ENCODE measurements at regions of chr2 and their contacts with region 1.

Region 1: GRCh38 chr2:25714740-25715139 is 41.4 kb upstream of the DTNB start:
- DNase-seq: no peak
- ATAC-seq: no peak
- H3K4me3 ChIP-seq: no peak overlapping the region
- H3K4me3 Mint-ChIP-seq: no peak overlapping the region
- H3K27ac ChIP-seq: no peak overlapping the region
- H3K27ac Mint-ChIP-seq: no peak overlapping the region
- H3K4me1 ChIP-seq: peaks cover 3 to 5% of the 10 kb centered on the region in 2 experiments
- H3K4me1 Mint-ChIP-seq: peaks cover 9 to 17% (median 16%) of the 10 kb centered on the region in 3 donors
- H3K27me3 ChIP-seq: peaks cover 0 to 20% of the 10 kb centered on the region in 2 experiments
- H3K27me3 Mint-ChIP-seq: peaks cover 7 to 16% of the 10 kb centered on the region in 2 donors

Region 2: GRCh38 chr2:24754985-24755705 is 959.6 kb before region 1 on chr2:
- CTCF ChIA-PET with region 1: no interaction called
- POLR2A ChIA-PET with region 1: no interaction called
- DNase-seq: no peak
- ATAC-seq: no peak
- H3K4me3 ChIP-seq: no peak overlapping the region
- H3K4me3 Mint-ChIP-seq: no peak overlapping the region
- H3K27ac ChIP-seq: no peak overlapping the region
- H3K27ac Mint-ChIP-seq: no peak overlapping the region
- H3K4me1 ChIP-seq: no peaks in the 10 kb centered on the region
- H3K4me1 Mint-ChIP-seq: no peaks in the 10 kb centered on the region
- H3K27me3 ChIP-seq: no peaks in the 10 kb centered on the region
- H3K27me3 Mint-ChIP-seq: no peaks in the 10 kb centered on the region

Region 3: DNA sequence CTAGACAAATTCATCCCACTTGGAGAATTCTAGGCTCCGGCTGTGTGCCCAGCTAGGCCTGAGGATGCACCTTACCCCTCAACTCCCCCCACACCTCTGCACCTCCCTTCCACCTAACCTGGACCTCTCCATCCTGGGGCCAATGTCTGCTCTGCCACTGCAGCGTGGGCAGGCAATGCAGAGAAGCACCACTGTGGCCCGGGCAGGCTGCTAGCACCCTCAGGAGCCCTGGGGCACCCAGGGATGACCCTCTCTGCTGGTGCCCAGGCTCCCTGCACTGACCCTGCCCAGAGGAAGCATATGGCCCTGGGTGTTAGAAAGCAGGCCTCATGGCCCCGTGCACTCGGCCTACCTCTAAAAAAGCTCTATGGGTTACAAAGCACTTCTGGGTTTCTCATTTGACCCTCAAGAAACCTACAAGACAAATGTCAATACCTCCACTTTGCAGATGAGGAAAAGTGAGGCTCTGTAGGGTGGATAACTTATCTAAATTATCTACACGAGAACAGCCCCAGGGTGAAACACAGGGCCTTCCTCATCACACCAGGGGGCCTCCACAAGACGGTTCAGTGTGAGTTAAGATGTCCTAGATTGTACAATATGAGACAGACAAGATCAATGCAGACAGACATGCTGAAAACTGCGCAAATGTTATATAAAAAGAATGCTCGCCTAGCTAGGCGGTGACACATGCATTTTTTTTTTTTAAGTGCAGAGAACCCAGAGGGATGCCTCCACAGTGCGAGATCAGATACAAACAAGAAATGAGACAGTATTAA is 844.1 kb before region 1 on chr2:
- CTCF ChIA-PET with region 1: no interaction called
- POLR2A ChIA-PET with region 1: interaction called in 1 of 2 experiments, 16 read pairs
- DNase-seq: no peak
- ATAC-seq: no peak
- H3K4me3 ChIP-seq: no peak overlapping the region
- H3K4me3 Mint-ChIP-seq: no peak overlapping the region
- H3K27ac ChIP-seq: no peak overlapping the region
- H3K27ac Mint-ChIP-seq: no peak overlapping the region
- H3K4me1 ChIP-seq: no peaks in the 10 kb centered on the region
- H3K4me1 Mint-ChIP-seq: no peaks in the 10 kb centered on the region
- H3K27me3 ChIP-seq: no peaks in the 10 kb centered on the region
- H3K27me3 Mint-ChIP-seq: no peaks in the 10 kb centered on the region

Measured in T-cell (primary cell).